Astrocyte of the cerebellum (primary cell): ENCODE measurements at regions of chr10 and their contacts with region 1.

Region 1: GRCh38 chr10:74640134-74640931 is 186.1 kb upstream of the KAT6B start:
- DNase-seq: peak; percentile 13
- H3K4me3 ChIP-seq: no peak overlapping the region
- CTCF ChIP-seq: no peak

Region 2: GRCh38 chr10:74282151-74282850 is 358.0 kb before region 1 on chr10:
- in situ Hi-C with region 1: no loop called
- DNase-seq: peak; percentile 28
- H3K4me3 ChIP-seq: no peak overlapping the region
- CTCF ChIP-seq: no peak

Region 3: GRCh38 chr10:74738985-74739567 is 98.7 kb after region 1 on chr10:
- in situ Hi-C with region 1: loop called (anchors 10 kb)
- DNase-seq: no peak
- H3K4me3 ChIP-seq: no peak overlapping the region
- CTCF ChIP-seq: peak; percentile 37

Region 4: DNA sequence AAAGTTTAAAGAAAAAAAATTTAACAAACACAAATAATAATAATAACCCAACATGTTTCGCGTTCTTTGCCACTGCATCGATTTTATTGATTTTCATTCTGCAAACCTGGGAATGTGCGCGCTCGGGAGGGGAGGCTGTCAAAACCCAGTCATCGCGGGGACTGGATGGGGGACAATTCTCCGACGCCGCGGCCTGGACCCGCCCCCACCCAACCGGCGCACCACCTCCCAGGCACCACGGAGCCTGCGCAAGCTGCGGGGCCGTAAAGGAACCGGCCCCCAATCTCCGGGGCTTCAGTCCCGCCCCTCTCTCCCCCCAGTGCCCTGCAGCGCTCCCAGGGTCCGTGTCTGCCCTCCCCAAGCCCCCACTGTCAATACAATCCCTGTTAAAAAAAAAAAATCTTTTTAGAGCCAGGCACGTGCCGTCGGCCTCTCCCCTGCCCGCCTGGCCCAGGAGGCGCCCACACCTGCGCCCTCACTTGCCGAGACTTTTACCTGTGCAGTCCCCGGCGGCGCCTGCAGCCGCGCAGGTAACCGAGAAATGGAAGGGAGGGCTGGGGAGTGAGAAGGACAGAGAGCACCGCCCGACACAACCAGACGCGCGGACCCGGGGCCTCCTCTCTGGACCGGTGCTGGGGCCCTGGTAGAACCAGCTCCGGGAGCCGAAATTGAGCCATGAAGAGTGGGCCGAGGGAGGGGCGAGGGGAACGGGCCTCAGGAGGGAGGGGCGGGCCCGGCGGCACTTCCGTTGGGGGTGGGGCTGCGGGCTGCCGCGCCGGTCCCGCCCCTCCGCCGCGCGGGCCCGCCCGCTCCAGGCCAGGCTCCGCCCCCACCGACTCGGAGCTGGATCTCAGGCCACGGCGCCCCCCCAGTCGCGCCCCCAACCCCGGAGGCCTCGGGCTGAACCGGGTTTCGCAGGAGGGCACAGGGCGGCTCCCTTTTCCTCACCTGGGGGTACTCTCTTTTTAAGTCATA is 768.9 kb after region 1 on chr10:
- in situ Hi-C with region 1: no loop called
- DNase-seq: no peak
- H3K4me3 ChIP-seq: peak overlapping the region; percentile 68
- CTCF ChIP-seq: no peak